Endothelial cell of umbilical vein (primary cell): ENCODE measurements at regions of chr6 and their contacts with region 1.

Region 1: GRCh38 chr6:4987432-4987831 is 16.4 kb downstream of the RPP40 start:
- DNase-seq: no peak
- H3K4me3 ChIP-seq: no peak overlapping the region
- H3K27ac ChIP-seq: no peak overlapping the region
- H3K4me1 ChIP-seq: peaks cover 3% of the 10 kb centered on the region
- H3K27me3 ChIP-seq: peaks cover 0 to 4% of the 10 kb centered on the region in 2 experiments
- CTCF ChIP-seq: no peak
- POLR2A ChIP-seq: no peak

Region 2: GRCh38 chr6:4914420-4915159 is 72.8 kb before region 1 on chr6:
- CTCF ChIA-PET with region 1: no interaction called
- POLR2A ChIA-PET with region 1: no interaction called
- dilution Hi-C with region 1: no loop called
- intact Hi-C with region 1: no loop called
- DNase-seq: no peak
- H3K4me3 ChIP-seq: no peak overlapping the region
- H3K27ac ChIP-seq: no peak overlapping the region
- H3K4me1 ChIP-seq: peaks cover 6% of the 10 kb centered on the region
- H3K27me3 ChIP-seq: no peaks in the 10 kb centered on the region
- CTCF ChIP-seq: no peak
- POLR2A ChIP-seq: no peak

Region 3: GRCh38 chr6:5003604-5004372 is 16.4 kb after region 1 on chr6 and contains the start of gene RPP40:
- CTCF ChIA-PET with region 1: interaction called, 12 read pairs
- POLR2A ChIA-PET with region 1: no interaction called
- dilution Hi-C with region 1: no loop called
- intact Hi-C with region 1: no loop called
- DNase-seq: peak; percentile 98
- H3K4me3 ChIP-seq: peak within 1 kb of the TSS; percentile 51 to 72 (median 63)
- H3K27ac ChIP-seq: peak within 1 kb of the TSS; percentile 79
- H3K4me1 ChIP-seq: peaks cover 7% of the 10 kb centered on the region
- H3K27me3 ChIP-seq: no peaks in the 10 kb centered on the region
- CTCF ChIP-seq: peak; percentile 74 to 85
- POLR2A ChIP-seq: peak; percentile 88
- total RNA-seq, gene RPP40: 12.6 and 15.3 TPM in 2 replicates